ENCODE measurements at regions of chr3 and their contacts with region 1.

Region 1: GRCh38 chr3:167882067-167882667 is 146.6 kb downstream of the SERPINI1 start:
- DNase-seq: peak in 1 of 2 experiments; percentile 11
- H3K4me3 ChIP-seq: no peak overlapping the region
- H3K4me3 Mint-ChIP-seq: no peak overlapping the region
- H3K27ac Mint-ChIP-seq: no peak overlapping the region
- H3K4me1 ChIP-seq: no peaks in the 10 kb centered on the region
- H3K4me1 Mint-ChIP-seq: no peaks in the 10 kb centered on the region
- H3K27me3 ChIP-seq: no peaks in the 10 kb centered on the region
- H3K27me3 Mint-ChIP-seq: peaks cover 7% of the 10 kb centered on the region
- CTCF ChIP-seq: peak; percentile 38 to 41

Region 2: DNA sequence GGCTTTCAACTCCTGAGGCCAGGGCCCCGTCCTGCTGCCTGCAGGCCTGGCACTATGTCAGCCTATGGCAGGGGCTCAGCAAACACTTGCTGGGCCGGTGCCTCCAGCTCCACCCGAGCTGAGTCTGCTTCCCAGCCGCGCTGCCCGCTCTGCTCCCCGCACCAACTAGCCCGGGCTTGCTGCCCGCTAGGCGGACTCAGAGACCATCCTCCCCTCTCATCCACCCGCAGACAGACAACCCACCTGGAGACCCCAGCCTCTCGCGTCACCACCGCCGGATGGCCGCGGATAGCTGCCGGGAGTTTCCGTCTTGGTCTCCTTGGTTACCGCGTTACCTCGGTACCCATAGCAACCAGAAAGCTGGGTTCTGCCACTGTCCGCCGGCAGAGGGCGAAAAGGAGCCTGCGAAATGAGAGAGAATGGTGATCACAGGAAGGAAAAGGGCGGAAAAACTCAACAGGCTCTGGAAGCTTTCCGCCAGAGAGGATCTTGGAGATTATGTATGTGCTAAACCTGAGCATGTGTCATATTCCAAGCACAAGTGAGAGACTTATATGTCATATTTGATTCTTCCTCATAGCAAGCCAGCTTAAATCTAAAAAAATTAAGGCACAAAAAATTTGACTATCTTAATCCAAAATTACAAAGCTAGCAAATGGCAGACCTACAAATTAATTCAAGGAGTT is 502.0 kb before region 1 on chr3 and contains the start of gene ZBBX:
- CTCF ChIA-PET with region 1: interaction called, 10 read pairs
- POLR2A ChIA-PET with region 1: no interaction called
- intact Hi-C with region 1: loop called (anchors 5 kb)
- DNase-seq: peak; percentile 76 to 87
- H3K4me3 ChIP-seq: no peak within 1 kb of the TSS
- H3K4me3 Mint-ChIP-seq: peak within 1 kb of the TSS; percentile 70
- H3K27ac Mint-ChIP-seq: peak within 1 kb of the TSS; percentile 74
- H3K4me1 ChIP-seq: no peaks in the 10 kb centered on the region
- H3K4me1 Mint-ChIP-seq: peaks cover 5% of the 10 kb centered on the region
- H3K27me3 ChIP-seq: no peaks in the 10 kb centered on the region
- H3K27me3 Mint-ChIP-seq: peaks cover 4% of the 10 kb centered on the region
- CTCF ChIP-seq: peak; percentile 84 to 85
- total RNA-seq, gene ZBBX: not detected in 2 replicates

Region 3: DNA sequence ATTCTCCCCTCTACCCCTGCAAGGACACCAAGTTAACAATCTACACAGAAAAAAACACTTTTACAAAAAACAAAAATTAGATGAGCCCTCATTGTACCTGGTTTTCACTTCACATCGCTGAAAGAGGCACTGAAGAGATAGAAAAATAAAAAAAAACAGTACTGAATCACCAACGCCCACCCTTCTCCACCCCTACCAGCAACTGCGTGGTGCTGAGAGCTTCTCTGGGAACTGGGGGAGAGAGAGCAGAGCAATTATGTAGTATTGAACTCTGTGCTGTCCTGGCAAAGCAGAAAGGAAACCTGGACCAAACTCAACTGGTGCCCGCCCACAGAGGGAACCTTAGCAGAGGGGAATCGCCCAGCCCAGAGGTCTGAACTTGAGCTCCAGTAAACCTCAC is 273.0 kb before region 1 on chr3:
- CTCF ChIA-PET with region 1: no interaction called
- POLR2A ChIA-PET with region 1: no interaction called
- intact Hi-C with region 1: loop called (anchors 5 kb)
- DNase-seq: no peak
- H3K4me3 ChIP-seq: no peak overlapping the region
- H3K4me3 Mint-ChIP-seq: no peak overlapping the region
- H3K27ac Mint-ChIP-seq: no peak overlapping the region
- H3K4me1 ChIP-seq: no peaks in the 10 kb centered on the region
- H3K4me1 Mint-ChIP-seq: no peaks in the 10 kb centered on the region
- H3K27me3 ChIP-seq: no peaks in the 10 kb centered on the region
- H3K27me3 Mint-ChIP-seq: peaks cover 6% of the 10 kb centered on the region
- CTCF ChIP-seq: no peak

Region 4: DNA sequence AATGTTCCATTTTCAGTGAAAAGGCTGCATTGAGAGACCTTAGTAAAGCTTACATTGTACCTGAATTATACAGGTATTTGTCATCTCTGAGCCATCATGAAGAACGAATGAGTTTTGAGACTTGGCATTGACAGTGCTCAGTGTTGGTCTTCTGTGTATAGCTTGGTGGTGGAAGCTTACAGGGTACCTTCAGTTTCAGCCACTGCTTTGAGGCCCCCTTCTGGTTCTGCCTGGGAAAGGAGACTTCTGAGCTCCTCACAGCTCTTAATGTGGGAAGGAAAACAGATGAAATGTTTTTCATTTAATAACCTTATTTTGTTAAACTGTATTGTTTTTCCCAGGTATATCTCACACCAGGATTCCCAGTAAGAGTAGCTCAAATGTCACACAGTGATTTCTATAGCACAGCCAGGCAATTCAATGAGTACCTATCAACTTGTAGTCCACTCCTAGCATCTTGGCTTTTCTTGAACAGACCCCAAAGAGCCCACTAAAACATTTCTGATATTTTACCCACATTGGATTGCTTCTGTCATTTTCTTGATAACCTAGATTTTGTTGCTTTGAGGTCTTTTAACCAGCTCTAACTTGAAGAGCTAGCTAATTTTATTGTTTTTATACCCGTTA is 141.1 kb before region 1 on chr3:
- CTCF ChIA-PET with region 1: interaction called, 10 read pairs
- POLR2A ChIA-PET with region 1: no interaction called
- intact Hi-C with region 1: no loop called
- DNase-seq: peak; percentile 43 to 55
- H3K4me3 ChIP-seq: no peak overlapping the region
- H3K4me3 Mint-ChIP-seq: no peak overlapping the region
- H3K27ac Mint-ChIP-seq: no peak overlapping the region
- H3K4me1 ChIP-seq: no peaks in the 10 kb centered on the region
- H3K4me1 Mint-ChIP-seq: peaks cover 6% of the 10 kb centered on the region
- H3K27me3 ChIP-seq: no peaks in the 10 kb centered on the region
- H3K27me3 Mint-ChIP-seq: no peaks in the 10 kb centered on the region
- CTCF ChIP-seq: peak; percentile 36 to 85

Region 5: DNA sequence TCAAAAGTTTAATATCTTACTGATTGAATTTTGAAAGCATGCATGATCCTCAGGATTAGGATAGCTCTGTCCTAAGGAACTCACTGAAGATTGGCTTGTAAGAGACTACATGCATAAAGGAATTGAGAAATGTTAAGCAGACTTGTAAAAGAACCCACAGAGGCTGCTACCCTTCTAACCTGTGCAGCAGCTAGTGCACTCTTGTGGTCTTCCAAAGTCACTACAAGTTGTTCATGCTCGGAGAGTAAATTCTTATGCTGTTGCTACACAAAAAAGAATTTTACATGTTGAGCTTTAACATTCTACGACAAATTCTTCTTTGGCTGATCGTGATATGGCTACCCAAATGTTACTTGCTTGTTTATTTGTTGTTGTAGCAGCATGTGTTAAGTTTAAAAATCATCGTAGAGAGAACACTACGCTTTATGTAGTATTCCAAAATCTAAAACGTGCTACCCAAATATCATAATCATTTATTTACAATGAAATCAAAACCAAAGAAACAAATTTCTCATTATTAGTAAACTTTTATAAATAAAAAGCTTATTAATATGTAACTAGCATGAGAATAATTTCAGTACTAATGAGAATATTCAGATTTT is 158.5 kb after region 1 on chr3:
- CTCF ChIA-PET with region 1: no interaction called
- POLR2A ChIA-PET with region 1: no interaction called
- intact Hi-C with region 1: loop called (anchors 1 kb)
- DNase-seq: peak in 1 of 2 experiments; percentile 46
- H3K4me3 ChIP-seq: no peak overlapping the region
- H3K4me3 Mint-ChIP-seq: no peak overlapping the region
- H3K27ac Mint-ChIP-seq: no peak overlapping the region
- H3K4me1 ChIP-seq: no peaks in the 10 kb centered on the region
- H3K4me1 Mint-ChIP-seq: no peaks in the 10 kb centered on the region
- H3K27me3 ChIP-seq: no peaks in the 10 kb centered on the region
- H3K27me3 Mint-ChIP-seq: no peaks in the 10 kb centered on the region
- CTCF ChIP-seq: peak; percentile 73 to 85

Measured in Caco-2 (cell line).